ENCODE measurements at regions of chr6 and their contacts with region 1.

Region 1: GRCh38 chr6:5201271-5201670 is 59.5 kb downstream of the LYRM4 start:
- DNase-seq: no peak
- H3K4me3 Mint-ChIP-seq: no peak overlapping the region
- H3K27ac Mint-ChIP-seq: no peak overlapping the region
- H3K4me1 Mint-ChIP-seq: peaks cover 25% of the 10 kb centered on the region
- H3K27me3 Mint-ChIP-seq: no peaks in the 10 kb centered on the region

Region 2: DNA sequence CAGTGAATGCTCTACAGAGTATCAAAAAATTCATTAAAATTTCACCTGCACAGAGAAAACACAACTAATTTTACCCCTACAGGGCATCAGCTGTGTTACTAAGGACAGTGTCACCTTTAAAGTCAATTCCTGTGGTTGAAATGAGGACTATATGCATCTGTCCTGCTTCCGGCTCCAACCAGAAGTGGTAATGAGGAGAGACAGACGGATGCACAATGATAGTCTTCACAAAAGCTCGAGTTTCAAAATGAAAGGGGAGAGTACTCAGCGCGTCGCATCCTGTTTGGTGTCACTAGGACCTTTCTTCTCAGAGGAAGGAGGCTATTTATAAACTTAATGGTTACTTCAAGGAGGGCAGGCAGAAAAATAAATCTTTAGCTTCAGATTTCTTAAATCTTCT is 27.0 kb before region 1 on chr6:
- CTCF ChIA-PET with region 1: interaction called, 4 read pairs
- POLR2A ChIA-PET with region 1: interaction called, 3 read pairs
- intact Hi-C with region 1: loop called (anchors 1 kb)
- DNase-seq: peak; percentile 78
- H3K4me3 Mint-ChIP-seq: peak overlapping the region; percentile 27
- H3K27ac Mint-ChIP-seq: peak overlapping the region; percentile 71
- H3K4me1 Mint-ChIP-seq: peaks cover 40% of the 10 kb centered on the region
- H3K27me3 Mint-ChIP-seq: no peaks in the 10 kb centered on the region

Region 3: GRCh38 chr6:5260661-5261544 is 59.6 kb after region 1 on chr6 and contains the starts of genes FARS2 and LYRM4:
- CTCF ChIA-PET with region 1: interaction called, 3 read pairs
- POLR2A ChIA-PET with region 1: interaction called, 9 read pairs
- intact Hi-C with region 1: loop called (anchors 1 kb)
- DNase-seq: peak; percentile 93
- H3K4me3 Mint-ChIP-seq: peak within 1 kb of the TSS; percentile 98
- H3K27ac Mint-ChIP-seq: peak within 1 kb of the TSS; percentile 99
- H3K4me1 Mint-ChIP-seq: peaks cover 36% of the 10 kb centered on the region
- H3K27me3 Mint-ChIP-seq: no peaks in the 10 kb centered on the region
- total RNA-seq, gene FARS2: 22.7 to 23.7 TPM
- total RNA-seq, gene LYRM4: 50.6 to 53.6 TPM

Region 4: DNA sequence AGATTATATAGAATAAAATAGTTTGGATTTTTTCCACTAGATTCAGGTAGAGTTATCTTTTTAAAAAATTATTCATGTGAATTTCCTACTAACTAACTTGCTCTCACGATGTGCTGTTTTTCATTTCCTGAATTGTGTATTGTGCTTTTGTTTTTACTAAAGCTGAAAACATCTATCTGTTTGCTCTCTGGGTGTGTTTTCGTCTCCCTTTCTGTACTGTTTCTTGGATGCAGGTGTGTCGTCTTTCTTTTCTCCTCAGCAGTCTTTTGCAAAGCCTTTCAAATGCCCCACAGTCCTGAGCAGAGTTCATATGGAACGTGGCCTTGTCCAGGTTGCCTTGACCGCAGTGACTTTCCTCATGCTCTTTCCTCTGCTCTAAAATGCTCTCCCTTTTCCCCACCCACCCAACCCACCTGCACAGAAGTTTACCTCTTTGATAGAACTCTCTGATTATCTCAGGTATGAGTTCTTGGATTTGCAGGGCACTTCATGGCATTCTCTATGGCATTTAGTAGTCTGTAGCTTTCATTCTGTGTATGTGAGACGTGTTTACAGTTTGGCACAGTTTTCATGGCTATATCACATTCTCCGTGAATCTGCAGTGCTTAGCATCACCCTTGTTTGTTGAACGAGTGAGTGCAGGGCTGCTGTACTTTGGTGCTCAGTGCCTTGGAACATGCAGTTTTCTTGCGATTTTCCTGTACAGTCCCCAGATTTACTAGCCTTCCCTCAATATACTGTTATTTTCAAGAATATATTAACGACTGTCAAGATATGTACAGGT is 137.1 kb after region 1 on chr6:
- CTCF ChIA-PET with region 1: no interaction called
- POLR2A ChIA-PET with region 1: no interaction called
- intact Hi-C with region 1: loop called (anchors 1 kb)
- DNase-seq: no peak
- H3K4me3 Mint-ChIP-seq: no peak overlapping the region
- H3K27ac Mint-ChIP-seq: no peak overlapping the region
- H3K4me1 Mint-ChIP-seq: peaks cover 35% of the 10 kb centered on the region
- H3K27me3 Mint-ChIP-seq: no peaks in the 10 kb centered on the region

Measured in activated CD4-positive, alpha-beta memory T cell treated with anti-CD3 and anti-CD28 coated beads for 36 hours (primary cell).